ENCODE measurements at regions of chr5 and their contacts with region 1.

Region 1: GRCh38 chr5:33313150-33313549 is 127.6 kb upstream of the TARS1 start:
- DNase-seq: peak; percentile 99
- ATAC-seq: peak; percentile 77
- H3K4me3 ChIP-seq: peak overlapping the region; percentile 22
- H3K27ac ChIP-seq: peak overlapping the region; percentile 96
- H3K4me1 ChIP-seq: peaks cover 76% of the 10 kb centered on the region
- H3K27me3 ChIP-seq: no peaks in the 10 kb centered on the region
- CTCF ChIP-seq: no peak

Region 2: DNA sequence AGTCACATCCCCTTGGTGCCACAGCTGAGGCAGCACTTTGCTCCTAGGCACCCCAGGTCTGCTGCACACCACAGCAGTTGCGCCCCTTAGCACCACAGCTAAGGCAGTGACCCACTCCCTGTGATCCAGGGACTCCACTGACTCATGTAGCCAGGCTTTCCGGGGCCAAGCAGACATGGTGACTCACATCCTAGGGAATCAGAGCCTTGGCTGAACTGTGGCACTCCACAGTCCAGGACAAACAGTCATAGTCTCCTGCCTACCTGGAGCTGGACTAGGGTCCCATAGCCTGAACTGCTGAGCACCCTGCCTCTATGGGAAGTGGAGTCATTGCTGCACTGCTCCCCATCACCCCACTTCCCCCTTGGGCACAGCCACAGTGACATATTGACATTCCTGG is 263.3 kb before region 1 on chr5:
- CTCF ChIA-PET with region 1: no interaction called
- POLR2A ChIA-PET with region 1: no interaction called
- intact Hi-C with region 1: loop called (anchors 10 kb)
- DNase-seq: peak; percentile 94
- ATAC-seq: peak; percentile 90
- H3K4me3 ChIP-seq: peak overlapping the region; percentile 69
- H3K27ac ChIP-seq: peak overlapping the region; percentile 98
- H3K4me1 ChIP-seq: peaks cover 38% of the 10 kb centered on the region
- H3K27me3 ChIP-seq: no peaks in the 10 kb centered on the region
- CTCF ChIP-seq: no peak

Region 3: DNA sequence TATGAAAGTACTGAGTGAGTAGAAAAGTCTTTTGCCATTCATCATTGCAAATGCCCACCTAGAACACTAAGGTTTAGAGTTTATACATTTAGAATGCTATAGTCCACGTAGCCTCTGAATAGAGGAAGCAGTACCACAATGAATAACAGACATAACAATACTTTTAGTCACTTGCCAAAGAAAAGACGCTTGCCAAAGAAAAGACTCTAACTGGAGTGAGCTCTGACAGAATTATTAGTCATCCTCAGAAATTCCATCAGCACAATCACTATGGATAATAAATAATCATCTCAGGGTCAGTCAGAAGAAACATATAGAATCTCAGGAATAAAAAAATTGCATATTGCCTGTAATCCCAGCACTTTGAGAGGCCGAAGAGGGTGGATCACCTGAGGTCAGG is 40.9 kb before region 1 on chr5:
- CTCF ChIA-PET with region 1: no interaction called
- POLR2A ChIA-PET with region 1: no interaction called
- intact Hi-C with region 1: loop called (anchors 5 kb)
- DNase-seq: peak; percentile 98
- ATAC-seq: peak; percentile 98
- H3K4me3 ChIP-seq: no peak overlapping the region
- H3K27ac ChIP-seq: peak overlapping the region; percentile 71
- H3K4me1 ChIP-seq: peaks cover 19% of the 10 kb centered on the region
- H3K27me3 ChIP-seq: no peaks in the 10 kb centered on the region
- CTCF ChIP-seq: no peak

Region 4: DNA sequence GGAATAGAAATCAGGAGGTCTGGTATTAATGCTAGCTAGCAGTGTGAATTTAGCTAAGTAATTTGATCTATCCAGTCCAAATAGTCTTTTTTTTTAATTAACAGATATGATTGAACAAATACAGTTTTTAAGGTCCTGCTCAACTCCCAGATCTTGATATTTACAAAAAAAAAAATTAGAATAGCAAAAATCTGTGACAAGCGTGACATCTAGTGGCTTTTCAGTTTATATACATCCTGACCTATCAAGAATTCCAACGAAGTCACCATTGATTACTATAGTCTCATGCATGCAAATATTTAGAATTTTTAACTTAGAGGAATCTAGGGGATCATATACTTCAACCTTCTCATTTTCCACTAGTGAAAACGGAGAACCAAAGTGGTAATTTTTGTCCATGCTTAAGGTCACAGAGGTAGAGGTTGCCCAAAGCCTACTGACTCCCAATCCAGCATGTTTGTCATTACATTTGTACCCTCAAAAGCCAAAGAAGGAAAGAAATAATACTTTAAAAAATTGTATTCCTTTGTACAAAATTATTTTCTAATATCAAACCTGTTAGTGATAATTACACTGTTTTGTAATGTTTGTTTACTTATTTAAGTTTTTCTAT is 110.0 kb after region 1 on chr5:
- CTCF ChIA-PET with region 1: interaction called, 3 read pairs
- POLR2A ChIA-PET with region 1: interaction called, 15 read pairs
- intact Hi-C with region 1: no loop called
- DNase-seq: peak; percentile 69
- ATAC-seq: peak; percentile 43; the same call in 1 of the 2 replicates
- H3K4me3 ChIP-seq: no peak overlapping the region
- H3K27ac ChIP-seq: no peak overlapping the region
- H3K4me1 ChIP-seq: no peaks in the 10 kb centered on the region
- H3K27me3 ChIP-seq: no peaks in the 10 kb centered on the region
- CTCF ChIP-seq: peak; percentile 73